Posterior cingulate gyrus (tissue), 11 donors: ENCODE measurements at regions of chr2 and their contacts with region 1.

Region 1: GRCh38 chr2:108604196-108604595 is 69.9 kb downstream of the LIMS1 start:
- DNase-seq: no peak

Region 2: DNA sequence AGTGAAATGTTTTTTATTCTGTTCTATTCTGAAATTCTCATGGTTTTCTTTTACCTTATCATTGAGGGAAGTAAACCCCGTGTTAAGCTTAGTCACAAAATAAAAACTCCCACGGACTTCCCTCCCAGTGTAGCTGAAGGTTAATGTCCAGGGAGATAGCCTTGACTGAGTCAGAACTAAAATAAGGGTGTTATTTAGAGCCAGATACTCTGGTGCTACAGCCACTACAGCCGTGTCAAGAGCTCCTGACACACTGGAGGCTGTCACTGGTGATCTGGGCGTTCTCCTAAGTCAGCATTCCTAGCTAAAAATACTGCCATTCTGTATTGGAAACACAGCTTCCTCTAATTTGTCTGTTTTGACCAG is 33.1 kb after region 1 on chr2:
- intact Hi-C with region 1: loop called (anchors 5 kb)
- DNase-seq: peak in 1 of 10 donors; percentile 48